Natural killer cell (primary cell): ENCODE measurements at regions of chr16 and their contacts with region 1.

Region 1: GRCh38 chr16:69339289-69340108 is at the starts of genes COG8 and NIP7:
- DNase-seq: peak; percentile 89 to 97
- ATAC-seq: peak; percentile 89 to 94 (median 92)
- H3K4me3 ChIP-seq: peak within 1 kb of the TSS; percentile 88
- H3K4me3 Mint-ChIP-seq: peak within 1 kb of the TSS; percentile 100
- H3K27ac ChIP-seq: peak within 1 kb of the TSS; percentile 72
- H3K27ac Mint-ChIP-seq: peak within 1 kb of the TSS; percentile 94 to 99
- H3K4me1 ChIP-seq: peaks cover 27% of the 10 kb centered on the region
- H3K4me1 Mint-ChIP-seq: peaks cover 36 to 38% of the 10 kb centered on the region in 2 donors
- H3K27me3 ChIP-seq: no peaks in the 10 kb centered on the region
- H3K27me3 Mint-ChIP-seq: no peaks in the 10 kb centered on the region
- CTCF ChIP-seq: peak; percentile 93
- total RNA-seq, gene COG8: 26.3 to 34.6 (median 29.0) TPM
- total RNA-seq, gene NIP7: 33.7 to 41.8 (median 37.7) TPM

Region 2: DNA sequence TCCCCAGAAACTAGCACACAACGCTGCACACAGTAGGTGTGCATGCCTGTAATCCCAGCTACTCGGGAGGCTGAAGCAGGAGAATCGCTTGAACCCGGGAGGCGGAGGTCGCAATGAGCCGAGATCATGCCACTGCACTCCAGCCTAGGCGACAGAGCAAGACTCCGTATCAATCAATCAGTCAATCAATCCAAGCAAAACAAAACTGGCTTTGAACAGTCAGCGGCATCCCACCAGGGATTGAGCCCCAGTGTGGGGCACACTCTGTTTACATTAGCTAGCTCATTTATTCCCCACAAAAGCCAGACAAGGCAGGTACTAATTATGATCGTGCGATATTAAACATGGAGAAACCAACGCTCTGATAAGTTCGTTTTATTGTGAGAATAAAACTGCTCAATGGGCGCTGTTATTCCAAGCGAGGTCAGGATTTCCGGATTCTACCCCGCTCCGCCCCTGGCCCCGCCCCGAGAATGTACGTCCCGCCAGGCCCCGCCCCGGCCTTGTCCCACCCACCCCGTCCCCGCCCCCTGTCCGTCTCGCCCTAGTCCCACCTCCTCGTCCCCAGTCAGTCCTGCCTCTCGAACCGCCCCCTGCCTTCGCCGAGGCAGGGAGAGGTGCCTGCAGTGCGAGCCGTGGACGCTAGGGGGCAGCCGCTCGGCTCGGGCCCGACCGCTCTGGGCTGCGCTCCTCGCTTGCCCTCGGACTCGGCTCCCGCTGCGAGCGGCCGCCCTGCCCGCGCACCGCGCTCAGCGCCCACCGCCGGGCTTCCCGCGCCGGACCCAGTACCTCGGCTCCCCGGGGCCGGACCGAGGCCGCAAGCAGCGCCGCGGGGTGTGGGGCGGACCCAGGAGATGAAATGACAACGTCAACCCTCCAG is 28.6 kb before region 1 on chr16 and contains the start of gene VPS4A:
- intact Hi-C with region 1: loop called (anchors 1 kb)
- DNase-seq: peak; percentile 98
- ATAC-seq: peak; percentile 95 to 100 (median 97)
- H3K4me3 ChIP-seq: peak within 1 kb of the TSS; percentile 55
- H3K4me3 Mint-ChIP-seq: peak within 1 kb of the TSS; percentile 98
- H3K27ac ChIP-seq: peak within 1 kb of the TSS; percentile 78
- H3K27ac Mint-ChIP-seq: peak within 1 kb of the TSS; percentile 90 to 93
- H3K4me1 ChIP-seq: peaks cover 20% of the 10 kb centered on the region
- H3K4me1 Mint-ChIP-seq: peaks cover 21 to 32% of the 10 kb centered on the region in 2 donors
- H3K27me3 ChIP-seq: no peaks in the 10 kb centered on the region
- H3K27me3 Mint-ChIP-seq: no peaks in the 10 kb centered on the region
- CTCF ChIP-seq: peak; percentile 85
- total RNA-seq, gene VPS4A: 60.5 to 71.5 (median 62.5) TPM

Region 3: DNA sequence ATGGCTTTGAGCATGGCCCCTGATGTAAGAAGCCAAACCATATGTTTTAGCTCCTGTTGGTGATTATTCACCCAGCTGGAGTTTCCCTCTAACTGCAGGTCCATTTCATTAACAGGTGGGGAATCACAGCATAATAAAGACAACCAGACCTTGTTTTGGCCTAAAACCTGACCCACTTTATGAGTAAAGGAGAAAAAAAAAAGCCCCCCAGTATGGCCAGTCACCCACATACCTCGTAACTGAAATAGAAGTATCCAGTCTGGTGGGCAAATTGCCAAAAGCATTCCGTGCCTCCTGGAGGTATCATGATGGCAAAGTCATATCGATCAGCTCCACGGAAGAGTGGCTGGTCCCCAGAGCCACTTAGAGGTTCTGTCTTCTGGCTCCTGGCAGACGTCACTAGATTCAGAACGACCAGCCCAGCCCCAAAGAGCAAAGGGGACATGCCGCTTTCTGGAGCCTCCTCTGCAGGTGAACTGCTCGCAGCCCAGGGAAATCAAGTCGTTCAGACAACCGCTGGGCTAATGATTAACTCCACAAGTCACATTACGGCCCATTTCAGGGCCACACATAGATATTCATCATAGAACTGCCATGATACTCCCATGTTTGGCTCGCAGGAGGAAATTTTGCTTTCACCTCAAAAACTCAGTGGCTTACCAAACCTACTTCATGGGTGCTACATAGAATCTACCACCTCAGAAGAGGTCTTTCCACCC is 12.0 kb after region 1 on chr16 and contains the start of gene TMED6:
- intact Hi-C with region 1: no loop called
- DNase-seq: no peak
- ATAC-seq: no peak
- H3K4me3 ChIP-seq: no peak within 1 kb of the TSS
- H3K4me3 Mint-ChIP-seq: no peak within 1 kb of the TSS
- H3K27ac ChIP-seq: no peak within 1 kb of the TSS
- H3K27ac Mint-ChIP-seq: no peak within 1 kb of the TSS
- H3K4me1 ChIP-seq: peaks cover 4% of the 10 kb centered on the region
- H3K4me1 Mint-ChIP-seq: peaks cover 0 to 4% of the 10 kb centered on the region in 2 donors
- H3K27me3 ChIP-seq: no peaks in the 10 kb centered on the region
- H3K27me3 Mint-ChIP-seq: no peaks in the 10 kb centered on the region
- CTCF ChIP-seq: no peak
- total RNA-seq, gene TMED6: 1.4 to 1.8 (median 1.6) TPM

Region 4: DNA sequence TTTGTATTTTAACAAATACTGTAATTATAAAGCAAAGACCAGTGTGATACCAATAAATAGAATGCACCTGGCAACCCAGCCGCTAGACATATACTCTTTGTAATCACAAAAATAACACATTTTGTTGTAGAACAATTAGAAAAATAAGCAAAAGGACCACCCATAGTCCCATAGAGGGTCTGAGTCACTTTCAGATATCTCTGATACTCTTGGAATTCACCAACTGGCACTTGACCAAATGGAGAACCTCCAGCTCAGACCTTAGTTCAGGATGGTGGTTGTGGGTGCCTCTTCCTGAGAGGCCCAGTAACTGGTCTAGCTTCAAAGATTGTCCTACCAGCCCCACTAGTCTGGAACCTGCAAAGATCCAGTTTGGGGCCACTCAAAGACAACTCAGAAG is 47.1 kb after region 1 on chr16:
- intact Hi-C with region 1: loop called (anchors 5 kb)
- DNase-seq: no peak
- ATAC-seq: no peak
- H3K4me3 ChIP-seq: no peak overlapping the region
- H3K4me3 Mint-ChIP-seq: peak overlapping the region; percentile 97
- H3K27ac ChIP-seq: peak overlapping the region; percentile 68
- H3K27ac Mint-ChIP-seq: peak overlapping the region in 1 of 2 donors; percentile 89
- H3K4me1 ChIP-seq: peaks cover 10% of the 10 kb centered on the region
- H3K4me1 Mint-ChIP-seq: peaks cover 31 to 35% of the 10 kb centered on the region in 2 donors
- H3K27me3 ChIP-seq: no peaks in the 10 kb centered on the region
- H3K27me3 Mint-ChIP-seq: no peaks in the 10 kb centered on the region
- CTCF ChIP-seq: no peak

Region 5: GRCh38 chr16:69397821-69398521 is 58.5 kb after region 1 on chr16:
- intact Hi-C with region 1: no loop called
- DNase-seq: no peak
- ATAC-seq: no peak
- H3K4me3 ChIP-seq: no peak overlapping the region
- H3K4me3 Mint-ChIP-seq: no peak overlapping the region
- H3K27ac ChIP-seq: no peak overlapping the region
- H3K27ac Mint-ChIP-seq: peak overlapping the region in 1 of 2 donors; percentile 48
- H3K4me1 ChIP-seq: no peaks in the 10 kb centered on the region
- H3K4me1 Mint-ChIP-seq: peaks cover 5 to 7% of the 10 kb centered on the region in 2 donors
- H3K27me3 ChIP-seq: no peaks in the 10 kb centered on the region
- H3K27me3 Mint-ChIP-seq: no peaks in the 10 kb centered on the region
- CTCF ChIP-seq: no peak

Region 6: DNA sequence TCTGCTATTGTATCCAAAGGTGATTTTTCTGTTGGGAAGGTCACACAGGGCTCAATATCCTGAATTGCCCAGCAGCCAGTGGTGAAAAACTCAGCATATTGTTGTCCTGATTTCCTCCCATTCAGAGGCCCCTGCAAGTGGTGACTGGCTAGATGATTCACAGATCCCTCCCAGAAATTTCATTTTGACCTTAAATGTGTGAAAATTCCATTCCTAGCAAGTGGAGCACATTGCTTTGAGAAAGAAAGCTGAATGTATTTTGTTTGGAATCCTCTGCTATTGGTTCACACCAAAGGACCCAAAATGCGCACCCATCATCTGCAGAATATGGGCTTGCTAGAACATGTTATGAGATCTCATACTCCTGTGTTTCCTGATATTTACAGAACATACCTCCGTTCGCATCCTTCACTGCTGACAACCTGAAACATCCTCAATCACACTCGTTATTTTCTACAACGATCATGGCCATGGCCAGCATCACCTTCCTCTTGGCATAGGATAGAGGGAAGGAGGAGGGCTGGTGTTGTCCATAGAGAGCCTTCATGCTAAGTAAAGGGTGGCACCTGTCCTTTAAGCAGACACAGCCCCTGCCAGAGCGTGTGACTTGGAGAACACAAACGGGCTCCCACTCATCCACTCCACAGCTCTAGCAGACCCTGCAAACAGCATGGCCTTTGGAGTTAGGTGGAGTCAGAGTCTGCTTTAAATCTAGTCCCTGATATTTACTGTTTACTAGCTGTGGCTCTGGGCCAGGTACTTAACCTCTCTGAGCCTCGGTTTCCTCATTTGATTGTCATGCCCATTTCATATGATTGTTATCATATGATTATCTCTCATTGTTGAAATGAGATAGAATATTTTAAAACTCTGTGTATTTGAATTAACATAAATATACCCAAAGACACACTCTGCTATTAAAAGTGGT is 195.9 kb after region 1 on chr16:
- intact Hi-C with region 1: no loop called
- DNase-seq: no peak
- ATAC-seq: no peak
- H3K4me3 ChIP-seq: no peak overlapping the region
- H3K4me3 Mint-ChIP-seq: no peak overlapping the region
- H3K27ac ChIP-seq: no peak overlapping the region
- H3K27ac Mint-ChIP-seq: no peak overlapping the region
- H3K4me1 ChIP-seq: peaks cover 6% of the 10 kb centered on the region
- H3K4me1 Mint-ChIP-seq: peaks cover 11 to 15% of the 10 kb centered on the region in 2 donors
- H3K27me3 ChIP-seq: no peaks in the 10 kb centered on the region
- H3K27me3 Mint-ChIP-seq: peaks cover 0 to 10% of the 10 kb centered on the region in 2 donors
- CTCF ChIP-seq: no peak